ENCODE measurements at regions of chr15 and their contacts with region 1.

Region 1: GRCh38 chr15:82809404-82810060 is at the start of gene WHAMM:
- DNase-seq: peak; percentile 98
- ATAC-seq: peak; percentile 95
- H3K4me3 ChIP-seq: peak within 1 kb of the TSS; percentile 64 to 85 (median 84)
- H3K27ac ChIP-seq: peak within 1 kb of the TSS; percentile 97
- H3K4me1 ChIP-seq: peaks cover 31% of the 10 kb centered on the region
- H3K27me3 ChIP-seq: no peaks in the 10 kb centered on the region; a peak in 2 of 5 replicates
- CTCF ChIP-seq: peak; percentile 24
- EP300 ChIP-seq: no peak
- POLR2A ChIP-seq: peak; percentile 82 to 84
- RAD21 ChIP-seq: peak; percentile 35; the same call in 1 of the 2 replicates
- total RNA-seq, gene WHAMM: 2.7 and 2.9 TPM in 2 replicates

Region 2: GRCh38 chr15:82763361-82764116 is 46.0 kb before region 1 on chr15:
- CTCF ChIA-PET with region 1: no interaction called
- POLR2A ChIA-PET with region 1: no interaction called
- in situ Hi-C with region 1: no loop called
- intact Hi-C with region 1: loop called (anchors 2 kb)
- DNase-seq: peak; percentile 86
- ATAC-seq: peak; percentile 95
- H3K4me3 ChIP-seq: peak overlapping the region in 2 of 3 experiments; percentile 16 to 39; a peak in 3 of 6 replicates
- H3K27ac ChIP-seq: peak overlapping the region; percentile 63
- H3K4me1 ChIP-seq: peaks cover 43% of the 10 kb centered on the region
- H3K27me3 ChIP-seq: no peaks in the 10 kb centered on the region
- CTCF ChIP-seq: no peak
- EP300 ChIP-seq: peak in 1 of 2 experiments; percentile 64; a peak in 1 of 4 replicates
- POLR2A ChIP-seq: peak in 1 of 2 experiments; percentile 41; a peak in 1 of 4 replicates
- RAD21 ChIP-seq: no peak

Region 3: DNA sequence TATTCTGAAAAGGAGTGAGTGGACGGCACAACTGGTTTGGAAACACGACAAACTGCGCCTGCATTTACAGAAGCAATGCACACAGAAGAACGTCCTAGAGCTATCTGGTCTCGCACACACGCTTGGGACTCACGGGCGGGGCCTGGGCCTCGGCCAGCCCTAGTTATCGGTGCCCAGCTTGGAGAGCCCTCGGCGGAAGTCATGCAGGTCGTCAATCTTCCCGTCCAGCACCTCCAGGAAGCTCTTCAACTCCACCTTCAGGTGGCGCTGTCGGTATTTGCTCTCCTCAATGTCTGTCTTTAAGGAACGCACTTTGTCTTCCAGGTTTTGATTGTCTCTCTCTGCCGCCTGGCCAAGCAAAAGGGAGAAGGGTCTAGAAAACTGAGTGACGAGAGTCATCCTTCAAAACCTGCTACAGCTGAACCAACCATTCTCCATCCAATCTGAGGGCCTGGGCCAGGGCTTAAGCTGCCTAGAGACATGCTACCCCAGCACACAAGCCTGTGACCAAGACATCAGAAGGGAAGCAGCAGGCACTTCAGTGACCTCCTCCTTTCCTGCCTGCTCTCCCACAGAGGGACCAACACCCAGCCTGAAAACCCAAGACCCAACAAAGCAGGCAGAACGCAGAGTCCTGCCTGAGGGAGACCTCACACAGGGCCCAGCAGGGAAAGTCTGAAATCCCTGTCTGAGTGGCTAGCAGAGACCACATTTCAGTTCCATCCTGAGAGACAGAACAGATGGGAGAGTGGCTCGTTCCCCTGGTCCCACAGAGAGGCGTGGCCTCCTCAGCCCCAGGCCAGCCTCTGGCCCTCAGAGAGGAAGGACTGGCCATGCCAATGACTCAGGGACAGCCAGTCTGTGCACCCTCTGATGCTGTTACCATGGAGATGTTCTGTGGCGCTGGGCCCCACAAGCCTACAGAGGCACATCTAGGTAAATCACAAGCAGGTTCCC is 40.3 kb after region 1 on chr15:
- CTCF ChIA-PET with region 1: no interaction called
- POLR2A ChIA-PET with region 1: no interaction called
- in situ Hi-C with region 1: no loop called
- intact Hi-C with region 1: no loop called
- DNase-seq: peak; percentile 73
- ATAC-seq: peak; percentile 91
- H3K4me3 ChIP-seq: peak overlapping the region in 1 of 3 experiments; percentile 18; a peak in 1 of 6 replicates
- H3K27ac ChIP-seq: no peak overlapping the region
- H3K4me1 ChIP-seq: peaks cover 19% of the 10 kb centered on the region
- H3K27me3 ChIP-seq: no peaks in the 10 kb centered on the region; a peak in 1 of 5 replicates
- CTCF ChIP-seq: peak; percentile 88
- EP300 ChIP-seq: no peak
- POLR2A ChIP-seq: no peak
- RAD21 ChIP-seq: peak; percentile 42; the same call in 1 of the 2 replicates

Region 4: GRCh38 chr15:82882273-82882928 is 72.9 kb after region 1 on chr15:
- CTCF ChIA-PET with region 1: no interaction called
- POLR2A ChIA-PET with region 1: no interaction called
- in situ Hi-C with region 1: no loop called
- intact Hi-C with region 1: no loop called
- DNase-seq: no peak
- ATAC-seq: no peak
- H3K4me3 ChIP-seq: no peak overlapping the region
- H3K27ac ChIP-seq: no peak overlapping the region
- H3K4me1 ChIP-seq: no peaks in the 10 kb centered on the region
- H3K27me3 ChIP-seq: no peaks in the 10 kb centered on the region
- CTCF ChIP-seq: no peak
- EP300 ChIP-seq: no peak
- POLR2A ChIP-seq: no peak
- RAD21 ChIP-seq: no peak

Measured in HepG2 (cell line).